ENCODE measurements at regions of chr4 and their contacts with region 1.

Region 1: DNA sequence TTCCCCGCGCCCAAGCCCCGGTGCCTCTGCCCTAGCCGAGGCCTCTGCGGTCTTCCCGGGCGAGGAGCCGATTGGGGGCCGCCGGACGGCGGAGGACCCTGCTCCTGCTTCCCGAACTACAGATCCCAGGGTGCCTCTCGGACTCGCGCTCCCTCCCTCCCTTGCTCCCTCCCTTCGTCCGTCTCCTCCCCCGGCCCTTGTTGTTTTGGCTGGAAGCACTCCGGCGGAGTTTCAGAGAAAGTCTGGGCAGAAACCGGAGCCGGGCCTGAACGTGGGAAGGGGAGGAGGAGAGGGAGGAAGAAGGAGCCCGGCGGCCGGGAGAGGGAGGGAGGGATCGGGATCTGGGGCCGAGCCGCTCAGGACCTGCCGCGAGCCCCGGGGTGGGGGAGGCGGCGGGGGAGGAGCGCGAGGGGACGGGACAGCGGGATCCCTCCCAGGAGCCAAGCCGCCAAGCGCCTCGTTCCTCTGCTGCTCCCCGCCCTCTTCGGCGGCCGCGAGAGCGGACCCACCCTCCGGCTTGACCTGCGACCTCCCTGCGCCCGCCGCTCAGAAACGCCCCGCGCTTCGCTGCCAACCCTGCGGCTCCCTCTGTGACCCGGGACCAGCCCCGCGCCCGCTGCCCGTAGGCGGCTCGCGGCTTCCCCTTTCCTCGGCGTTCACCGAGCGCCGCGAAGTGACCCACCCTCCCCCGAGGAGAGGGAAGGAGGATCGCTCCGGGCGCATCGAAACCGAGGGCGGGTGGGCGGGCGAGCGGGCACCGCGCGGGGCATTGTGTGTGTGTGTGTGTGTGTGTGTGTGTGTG is 496 bp upstream of the GAB1 start:
- DNase-seq: peak; percentile 89 to 91
- H3K4me3 ChIP-seq: peak overlapping the region; percentile 76
- H3K4me3 Mint-ChIP-seq: peak overlapping the region; percentile 99
- H3K27ac Mint-ChIP-seq: peak overlapping the region; percentile 90
- H3K4me1 ChIP-seq: peaks cover 25% of the 10 kb centered on the region
- H3K4me1 Mint-ChIP-seq: peaks cover 22% of the 10 kb centered on the region
- H3K27me3 ChIP-seq: no peaks in the 10 kb centered on the region
- H3K27me3 Mint-ChIP-seq: no peaks in the 10 kb centered on the region
- CTCF ChIP-seq: no peak

Region 2: DNA sequence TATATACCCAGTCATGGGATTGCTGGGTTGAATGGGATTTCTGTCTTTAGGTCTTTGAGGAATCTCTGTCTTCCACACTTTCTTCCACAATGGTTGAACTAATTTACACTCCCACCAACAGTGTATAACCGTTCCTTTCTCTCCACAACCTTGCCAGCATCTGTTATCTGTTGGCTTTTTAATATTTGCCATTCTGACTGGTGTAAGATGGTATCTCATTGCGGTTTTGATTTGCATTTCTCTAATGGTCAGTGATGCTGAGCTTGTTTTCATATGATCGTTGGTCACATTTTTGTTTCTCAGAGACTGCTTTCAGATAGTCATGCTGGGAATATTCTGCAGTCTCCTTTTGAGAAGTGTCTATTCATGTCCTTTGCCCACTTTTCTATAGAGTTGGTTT is 276.9 kb before region 1 on chr4:
- CTCF ChIA-PET with region 1: no interaction called
- POLR2A ChIA-PET with region 1: no interaction called
- intact Hi-C with region 1: no loop called
- DNase-seq: no peak
- H3K4me3 ChIP-seq: no peak overlapping the region
- H3K4me3 Mint-ChIP-seq: no peak overlapping the region
- H3K27ac Mint-ChIP-seq: no peak overlapping the region
- H3K4me1 ChIP-seq: no peaks in the 10 kb centered on the region
- H3K4me1 Mint-ChIP-seq: peaks cover 3% of the 10 kb centered on the region
- H3K27me3 ChIP-seq: no peaks in the 10 kb centered on the region
- H3K27me3 Mint-ChIP-seq: no peaks in the 10 kb centered on the region
- CTCF ChIP-seq: no peak

Region 3: GRCh38 chr4:143224255-143224654 is 111.9 kb before region 1 on chr4:
- CTCF ChIA-PET with region 1: interaction called, 3 read pairs
- POLR2A ChIA-PET with region 1: interaction called, 4 read pairs
- intact Hi-C with region 1: loop called (anchors 1 kb)
- DNase-seq: peak in 1 of 2 experiments; percentile 2
- H3K4me3 ChIP-seq: no peak overlapping the region
- H3K4me3 Mint-ChIP-seq: peak overlapping the region; percentile 62
- H3K27ac Mint-ChIP-seq: peak overlapping the region; percentile 94
- H3K4me1 ChIP-seq: peaks cover 49% of the 10 kb centered on the region
- H3K4me1 Mint-ChIP-seq: peaks cover 20% of the 10 kb centered on the region
- H3K27me3 ChIP-seq: no peaks in the 10 kb centered on the region
- H3K27me3 Mint-ChIP-seq: no peaks in the 10 kb centered on the region
- CTCF ChIP-seq: no peak

Region 4: DNA sequence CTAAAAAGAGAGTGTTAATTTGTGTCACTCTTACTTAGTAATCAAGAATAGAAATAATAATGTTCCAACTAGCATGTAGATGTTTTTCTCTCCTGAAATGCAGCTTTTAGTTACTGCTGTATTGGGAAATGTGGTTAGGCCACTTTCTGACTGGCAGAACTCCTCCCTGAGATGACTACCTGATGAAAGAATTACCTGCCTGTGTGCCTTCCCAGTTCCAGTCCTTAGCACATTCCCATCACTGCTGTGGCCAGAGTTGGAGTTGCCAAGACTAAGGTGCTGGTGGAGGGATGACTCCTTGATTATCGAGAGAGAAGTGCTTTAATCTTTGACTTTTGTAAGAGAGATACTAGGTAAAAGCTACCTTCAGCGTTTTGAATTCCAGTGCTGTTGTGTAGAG is 10.0 kb after region 1 on chr4:
- CTCF ChIA-PET with region 1: no interaction called
- POLR2A ChIA-PET with region 1: no interaction called
- intact Hi-C with region 1: loop called (anchors 1 kb)
- DNase-seq: peak; percentile 49 to 57
- H3K4me3 ChIP-seq: no peak overlapping the region
- H3K4me3 Mint-ChIP-seq: no peak overlapping the region
- H3K27ac Mint-ChIP-seq: peak overlapping the region; percentile 91
- H3K4me1 ChIP-seq: peaks cover under 1% of the 10 kb centered on the region; the same call in 1 of the 2 replicates
- H3K4me1 Mint-ChIP-seq: peaks cover 28% of the 10 kb centered on the region
- H3K27me3 ChIP-seq: no peaks in the 10 kb centered on the region
- H3K27me3 Mint-ChIP-seq: no peaks in the 10 kb centered on the region
- CTCF ChIP-seq: no peak

Region 5: GRCh38 chr4:143358923-143359643 is 22.9 kb after region 1 on chr4:
- CTCF ChIA-PET with region 1: interaction called, 3 read pairs
- POLR2A ChIA-PET with region 1: interaction called, 3 read pairs
- intact Hi-C with region 1: loop called (anchors 1 kb)
- DNase-seq: peak; percentile 81 to 86
- H3K4me3 ChIP-seq: no peak overlapping the region
- H3K4me3 Mint-ChIP-seq: peak overlapping the region; percentile 70
- H3K27ac Mint-ChIP-seq: peak overlapping the region; percentile 84
- H3K4me1 ChIP-seq: peaks cover 65% of the 10 kb centered on the region
- H3K4me1 Mint-ChIP-seq: peaks cover 46% of the 10 kb centered on the region
- H3K27me3 ChIP-seq: no peaks in the 10 kb centered on the region
- H3K27me3 Mint-ChIP-seq: no peaks in the 10 kb centered on the region
- CTCF ChIP-seq: no peak

Region 6: DNA sequence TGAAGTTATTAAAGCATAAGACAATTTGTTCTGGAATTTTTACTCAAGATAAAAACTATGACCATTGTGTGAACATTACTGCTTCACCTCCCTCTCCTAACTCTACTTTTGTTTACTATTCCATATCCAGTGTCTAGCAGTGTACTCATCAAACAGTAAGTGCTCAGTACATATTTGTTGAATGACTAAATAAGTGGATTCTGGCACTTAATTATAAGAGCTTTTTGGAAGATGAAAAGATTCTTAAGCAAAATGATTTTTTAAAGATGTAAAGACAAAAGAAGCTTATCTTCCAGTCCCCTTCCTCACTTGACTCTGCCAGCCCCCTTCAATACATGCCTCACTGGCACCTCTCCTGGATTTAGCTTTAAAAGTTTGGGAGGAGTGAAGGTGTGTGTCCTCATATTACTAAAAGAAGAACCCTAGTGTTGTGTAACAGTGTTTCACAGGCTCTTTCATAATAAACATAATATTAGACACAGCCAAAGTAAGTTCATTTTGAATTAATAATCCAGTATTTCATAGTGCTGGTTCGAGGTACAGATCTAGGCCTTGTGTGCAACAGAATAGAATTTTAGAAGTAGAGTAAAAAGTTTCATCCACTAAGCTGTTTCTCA is 53.5 kb after region 1 on chr4:
- CTCF ChIA-PET with region 1: no interaction called
- POLR2A ChIA-PET with region 1: no interaction called
- intact Hi-C with region 1: loop called (anchors 2 kb)
- DNase-seq: no peak
- H3K4me3 ChIP-seq: no peak overlapping the region
- H3K4me3 Mint-ChIP-seq: peak overlapping the region; percentile 14
- H3K27ac Mint-ChIP-seq: no peak overlapping the region
- H3K4me1 ChIP-seq: peaks cover 58% of the 10 kb centered on the region
- H3K4me1 Mint-ChIP-seq: peaks cover 50% of the 10 kb centered on the region
- H3K27me3 ChIP-seq: no peaks in the 10 kb centered on the region
- H3K27me3 Mint-ChIP-seq: no peaks in the 10 kb centered on the region
- CTCF ChIP-seq: no peak

Region 7: GRCh38 chr4:143399113-143399949 is 63.2 kb after region 1 on chr4:
- CTCF ChIA-PET with region 1: no interaction called
- POLR2A ChIA-PET with region 1: no interaction called
- intact Hi-C with region 1: loop called (anchors 2 kb)
- DNase-seq: peak in 1 of 2 experiments; percentile 35
- H3K4me3 ChIP-seq: no peak overlapping the region
- H3K4me3 Mint-ChIP-seq: no peak overlapping the region
- H3K27ac Mint-ChIP-seq: no peak overlapping the region
- H3K4me1 ChIP-seq: no peaks in the 10 kb centered on the region
- H3K4me1 Mint-ChIP-seq: peaks cover 14% of the 10 kb centered on the region
- H3K27me3 ChIP-seq: no peaks in the 10 kb centered on the region
- H3K27me3 Mint-ChIP-seq: no peaks in the 10 kb centered on the region
- CTCF ChIP-seq: peak; percentile 57 to 58

Measured in Caco-2 (cell line).